ENCODE measurements at regions of chr5 and their contacts with region 1.

Region 1: GRCh38 chr5:59367791-59368394 is 525.6 kb downstream of the PDE4D start:
- DNase-seq: peak; percentile 72
- ATAC-seq: peak; percentile 65
- H3K4me3 Mint-ChIP-seq: no peak overlapping the region
- H3K27ac Mint-ChIP-seq: no peak overlapping the region
- H3K4me1 Mint-ChIP-seq: no peaks in the 10 kb centered on the region
- H3K27me3 Mint-ChIP-seq: peaks cover 4% of the 10 kb centered on the region

Region 2: GRCh38 chr5:59158165-59158564 is 209.7 kb before region 1 on chr5:
- CTCF ChIA-PET with region 1: no interaction called
- POLR2A ChIA-PET with region 1: no interaction called
- intact Hi-C with region 1: no loop called
- DNase-seq: no peak
- ATAC-seq: no peak
- H3K4me3 Mint-ChIP-seq: no peak overlapping the region
- H3K27ac Mint-ChIP-seq: no peak overlapping the region
- H3K4me1 Mint-ChIP-seq: peaks cover 15% of the 10 kb centered on the region
- H3K27me3 Mint-ChIP-seq: no peaks in the 10 kb centered on the region

Region 3: GRCh38 chr5:59193616-59194319 is 174.1 kb before region 1 on chr5:
- CTCF ChIA-PET with region 1: interaction called, 70 read pairs
- POLR2A ChIA-PET with region 1: interaction called, 6 read pairs
- intact Hi-C with region 1: loop called (anchors 1 kb)
- DNase-seq: no peak
- ATAC-seq: no peak
- H3K4me3 Mint-ChIP-seq: no peak overlapping the region
- H3K27ac Mint-ChIP-seq: no peak overlapping the region
- H3K4me1 Mint-ChIP-seq: peaks cover 6% of the 10 kb centered on the region
- H3K27me3 Mint-ChIP-seq: peaks cover 6% of the 10 kb centered on the region

Region 4: DNA sequence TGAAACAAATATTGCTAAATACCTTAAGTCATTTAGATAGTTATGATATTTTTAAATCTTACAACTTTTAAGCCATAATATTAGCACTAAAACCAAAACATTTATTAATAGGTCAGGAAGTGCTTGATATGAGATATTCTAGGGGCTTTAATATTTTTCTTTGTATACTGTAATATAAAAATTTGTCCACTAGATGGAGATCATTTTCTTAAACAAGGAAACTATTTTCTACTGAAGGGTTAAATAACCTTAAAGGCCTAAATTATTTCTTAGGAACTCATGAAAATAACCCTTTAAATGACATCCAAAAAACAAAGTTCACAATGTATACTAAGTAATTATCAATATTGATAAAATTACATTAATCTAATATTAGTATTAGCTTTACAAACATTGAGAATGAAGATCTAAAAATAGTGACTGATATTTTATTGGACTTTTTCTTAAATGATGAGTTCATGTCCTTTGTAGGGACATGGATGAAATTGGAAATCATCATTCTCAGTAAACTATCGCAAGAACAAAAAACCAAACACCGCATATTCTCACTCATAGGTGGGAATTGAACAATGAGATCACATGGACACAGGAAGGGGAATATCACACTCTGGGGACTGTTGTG is 149.4 kb before region 1 on chr5:
- CTCF ChIA-PET with region 1: interaction called, 8 read pairs
- POLR2A ChIA-PET with region 1: no interaction called
- intact Hi-C with region 1: loop called (anchors 1 kb)
- DNase-seq: no peak
- ATAC-seq: no peak
- H3K4me3 Mint-ChIP-seq: no peak overlapping the region
- H3K27ac Mint-ChIP-seq: no peak overlapping the region
- H3K4me1 Mint-ChIP-seq: peaks cover 2% of the 10 kb centered on the region
- H3K27me3 Mint-ChIP-seq: peaks cover 20% of the 10 kb centered on the region

Region 5: GRCh38 chr5:59380350-59380951 is 12.6 kb after region 1 on chr5:
- CTCF ChIA-PET with region 1: interaction called, 14 read pairs
- POLR2A ChIA-PET with region 1: no interaction called
- intact Hi-C with region 1: loop called in 1 of 2 experiments (anchors 1 kb)
- DNase-seq: peak; percentile 26
- ATAC-seq: peak; percentile 87
- H3K4me3 Mint-ChIP-seq: no peak overlapping the region
- H3K27ac Mint-ChIP-seq: no peak overlapping the region
- H3K4me1 Mint-ChIP-seq: no peaks in the 10 kb centered on the region
- H3K27me3 Mint-ChIP-seq: no peaks in the 10 kb centered on the region

Measured in activated CD4-positive, alpha-beta T cell treated with anti-CD3 and anti-CD28 coated beads for 36 hours (primary cell).